CD8-positive, alpha-beta T cell (primary cell): ENCODE measurements at regions of chr19 and their contacts with region 1.

Region 1: DNA sequence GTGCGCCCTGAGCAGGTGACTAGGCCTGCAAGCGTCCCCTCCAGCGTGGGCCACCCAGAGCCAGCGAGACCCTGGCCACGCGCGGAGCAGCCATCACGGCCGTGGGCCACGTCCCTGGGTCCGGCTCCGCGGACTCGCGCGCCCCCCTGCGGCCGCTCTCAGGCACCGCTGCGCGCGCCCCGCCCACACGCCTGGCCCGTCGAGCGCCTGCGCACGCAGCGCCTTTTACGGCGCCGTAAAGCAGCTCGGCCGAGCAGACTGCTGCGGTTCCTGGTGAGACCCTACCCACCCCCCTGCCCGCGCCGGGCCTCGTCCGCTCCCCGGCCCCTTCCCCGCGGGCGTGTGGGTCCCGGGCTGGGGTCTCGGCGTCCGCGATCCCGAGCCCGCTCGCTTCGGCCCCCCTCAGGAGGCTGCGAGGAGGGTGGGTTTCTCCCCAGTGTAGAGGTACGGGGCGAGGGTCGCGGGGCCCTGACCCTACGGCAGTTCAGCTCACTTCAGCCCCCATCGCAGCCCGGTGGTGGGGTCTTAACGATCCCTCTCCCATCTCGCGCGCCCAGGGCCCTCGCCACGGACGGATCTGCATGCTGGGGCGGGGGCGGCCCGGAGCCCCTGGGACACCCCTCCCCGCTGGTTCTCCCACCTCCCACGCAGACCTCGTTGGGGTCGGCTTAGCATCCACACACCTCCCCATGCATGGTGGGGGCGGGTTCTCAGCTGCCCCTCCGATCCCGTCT is at the start of gene TRAPPC5:
- DNase-seq: peak; percentile 75 to 92 (median 87)
- ATAC-seq: peak; percentile 61
- H3K4me3 ChIP-seq: peak within 1 kb of the TSS; percentile 92 to 99
- H3K4me3 Mint-ChIP-seq: peak within 1 kb of the TSS; percentile 91
- H3K27ac ChIP-seq: peak within 1 kb of the TSS; percentile 65 to 66
- H3K27ac Mint-ChIP-seq: peak within 1 kb of the TSS; percentile 92
- H3K4me1 ChIP-seq: peaks cover 33% of the 10 kb centered on the region
- H3K4me1 Mint-ChIP-seq: peaks cover 48% of the 10 kb centered on the region
- H3K27me3 ChIP-seq: peaks cover 0 to 7% of the 10 kb centered on the region in 2 experiments
- H3K27me3 Mint-ChIP-seq: peaks cover 12% of the 10 kb centered on the region
- CTCF ChIP-seq: peak; percentile 89
- total RNA-seq, gene TRAPPC5: 32.4 to 39.5 TPM

Region 2: DNA sequence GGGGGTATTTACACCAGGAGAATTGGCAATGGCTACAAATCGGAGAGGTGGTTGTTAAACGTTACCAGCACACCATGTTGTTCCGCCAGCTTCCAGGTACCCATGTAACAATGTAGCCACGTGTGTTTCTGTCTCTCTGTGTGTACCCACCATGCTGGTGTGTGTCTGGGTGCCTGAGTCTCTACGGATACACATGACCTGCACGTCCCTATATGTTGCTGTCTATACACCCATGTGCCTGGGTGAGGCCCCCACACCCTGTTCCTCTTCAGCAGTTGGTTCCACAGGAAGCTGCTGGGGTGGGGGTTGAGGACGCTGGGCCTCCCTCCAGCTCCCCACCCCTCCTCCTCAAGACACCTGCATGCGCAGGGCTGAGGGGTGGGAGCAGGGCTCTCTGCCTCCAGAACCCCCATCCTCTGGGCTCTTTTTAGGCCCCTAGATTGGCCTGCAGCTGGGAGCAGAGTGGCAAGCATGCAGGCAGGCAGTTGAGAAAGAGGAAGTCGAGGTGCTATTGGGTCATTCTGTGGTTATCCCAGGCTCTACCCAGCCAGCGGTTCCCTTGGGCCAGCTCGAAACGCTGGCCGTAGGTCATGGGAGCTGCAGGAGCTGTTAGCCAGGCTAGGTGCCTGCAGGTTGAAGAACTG is 332.1 kb before region 1 on chr19 and contains the start of gene ARHGEF18:
- CTCF ChIA-PET with region 1: no interaction called
- POLR2A ChIA-PET with region 1: no interaction called
- intact Hi-C with region 1: loop called in 1 of 2 experiments (anchors 5 kb)
- DNase-seq: peak; percentile 14 to 85 (median 68)
- ATAC-seq: peak; percentile 68
- H3K4me3 ChIP-seq: peak within 1 kb of the TSS; percentile 92 to 96
- H3K4me3 Mint-ChIP-seq: peak within 1 kb of the TSS; percentile 90
- H3K27ac ChIP-seq: peak within 1 kb of the TSS; percentile 74 to 83
- H3K27ac Mint-ChIP-seq: peak within 1 kb of the TSS; percentile 96
- H3K4me1 ChIP-seq: peaks cover 62% of the 10 kb centered on the region
- H3K4me1 Mint-ChIP-seq: peaks cover 70% of the 10 kb centered on the region
- H3K27me3 ChIP-seq: no peaks in the 10 kb centered on the region
- H3K27me3 Mint-ChIP-seq: no peaks in the 10 kb centered on the region
- CTCF ChIP-seq: no peak
- total RNA-seq, gene ARHGEF18: 78.8 to 81.0 TPM

Region 3: GRCh38 chr19:7652061-7652641 is 28.6 kb before region 1 on chr19:
- CTCF ChIA-PET with region 1: interaction called, 21 read pairs
- POLR2A ChIA-PET with region 1: no interaction called
- intact Hi-C with region 1: loop called (anchors 1 kb)
- DNase-seq: peak; percentile 78 to 96 (median 88)
- ATAC-seq: peak; percentile 93
- H3K4me3 ChIP-seq: peak overlapping the region; percentile 34 to 45
- H3K4me3 Mint-ChIP-seq: peak overlapping the region; percentile 75
- H3K27ac ChIP-seq: peak overlapping the region in 1 of 2 experiments; percentile 28
- H3K27ac Mint-ChIP-seq: peak overlapping the region; percentile 90
- H3K4me1 ChIP-seq: peaks cover 5% of the 10 kb centered on the region
- H3K4me1 Mint-ChIP-seq: peaks cover 10% of the 10 kb centered on the region
- H3K27me3 ChIP-seq: no peaks in the 10 kb centered on the region
- H3K27me3 Mint-ChIP-seq: peaks cover 3% of the 10 kb centered on the region
- CTCF ChIP-seq: peak; percentile 99

Region 4: DNA sequence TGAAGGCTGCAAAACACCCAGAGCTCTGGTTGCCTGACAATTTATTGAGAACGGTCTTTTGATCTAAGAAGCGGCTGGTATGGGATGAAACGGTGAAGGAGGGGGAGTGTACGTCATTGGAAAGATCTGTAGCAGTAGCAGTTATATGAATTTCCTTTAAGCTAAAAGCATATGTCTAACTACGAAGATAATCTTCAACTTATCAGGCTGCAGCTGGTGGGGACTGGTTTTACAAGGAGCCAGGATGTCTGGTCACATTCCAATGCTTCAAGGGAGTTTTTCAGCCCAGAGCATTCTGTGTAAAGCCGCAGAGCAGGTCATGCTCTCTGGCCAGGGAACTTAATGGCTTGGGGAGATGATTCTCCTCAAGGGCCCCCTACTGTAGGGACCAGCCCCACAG is 111.5 kb after region 1 on chr19:
- CTCF ChIA-PET with region 1: interaction called, 10 read pairs
- POLR2A ChIA-PET with region 1: no interaction called
- intact Hi-C with region 1: no loop called
- DNase-seq: no peak
- ATAC-seq: no peak
- H3K4me3 ChIP-seq: no peak overlapping the region
- H3K4me3 Mint-ChIP-seq: no peak overlapping the region
- H3K27ac ChIP-seq: no peak overlapping the region
- H3K27ac Mint-ChIP-seq: no peak overlapping the region
- H3K4me1 ChIP-seq: peaks cover 9% of the 10 kb centered on the region
- H3K4me1 Mint-ChIP-seq: peaks cover 6% of the 10 kb centered on the region
- H3K27me3 ChIP-seq: peaks cover 9 to 21% of the 10 kb centered on the region in 2 experiments
- H3K27me3 Mint-ChIP-seq: peaks cover 20% of the 10 kb centered on the region
- CTCF ChIP-seq: no peak

Region 5: DNA sequence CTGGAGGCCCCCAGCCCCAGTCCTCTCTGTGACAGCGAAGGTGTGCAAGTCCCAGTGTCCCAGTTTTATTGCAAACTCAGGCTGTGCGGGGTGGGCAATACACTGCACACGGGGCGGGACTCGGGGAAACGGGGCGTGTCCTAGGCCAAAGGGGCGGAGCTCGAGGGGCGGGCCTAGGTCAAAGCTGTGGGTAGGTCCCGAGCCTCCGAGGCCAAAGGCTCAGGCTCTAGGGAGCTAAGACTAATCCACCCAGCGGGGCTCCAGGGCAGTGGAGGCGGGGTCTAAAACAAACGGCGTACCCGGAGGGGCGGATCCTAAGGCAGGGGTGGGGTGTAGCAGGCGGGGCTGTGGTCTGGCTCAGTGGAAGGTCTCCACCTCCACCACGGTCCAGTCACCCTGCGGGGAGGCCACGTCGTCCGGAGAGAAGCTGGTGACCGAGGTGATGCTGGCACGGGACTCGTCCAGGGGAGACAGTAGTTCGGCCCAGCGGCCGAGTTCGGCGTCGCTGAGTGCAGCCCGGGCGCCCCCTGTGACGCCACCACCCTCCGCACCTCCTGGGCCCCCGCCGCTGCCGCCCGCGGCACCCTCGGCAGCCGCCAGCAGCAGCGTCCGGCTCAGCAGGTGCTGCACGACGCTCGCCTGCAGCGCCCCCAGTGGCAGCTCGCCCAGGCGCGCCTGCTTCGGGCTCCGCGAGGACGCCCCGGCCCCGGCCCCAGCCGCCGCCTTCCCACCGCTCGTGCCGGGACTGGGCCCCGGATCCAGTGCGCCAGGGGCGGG is 188.1 kb after region 1 on chr19:
- CTCF ChIA-PET with region 1: interaction called, 3 read pairs
- POLR2A ChIA-PET with region 1: no interaction called
- intact Hi-C with region 1: loop called in 1 of 2 experiments (anchors 2 kb)
- DNase-seq: peak; percentile 71 to 95 (median 85)
- ATAC-seq: peak; percentile 62
- H3K4me3 ChIP-seq: peak overlapping the region; percentile 61 to 62
- H3K4me3 Mint-ChIP-seq: peak overlapping the region; percentile 82
- H3K27ac ChIP-seq: peak overlapping the region; percentile 64 to 65
- H3K27ac Mint-ChIP-seq: peak overlapping the region; percentile 90
- H3K4me1 ChIP-seq: peaks cover 63% of the 10 kb centered on the region
- H3K4me1 Mint-ChIP-seq: peaks cover 44% of the 10 kb centered on the region
- H3K27me3 ChIP-seq: peaks cover 4 to 25% of the 10 kb centered on the region in 2 experiments
- H3K27me3 Mint-ChIP-seq: peaks cover 27% of the 10 kb centered on the region
- CTCF ChIP-seq: peak; percentile 82